AG04449 (cell line): ENCODE measurements at regions of chr12 and their contacts with region 1.

Region 1: GRCh38 chr12:120292661-120293531 is at the start of gene RNU4-1:
- DNase-seq: peak; percentile 79
- H3K4me3 ChIP-seq: peak within 1 kb of the TSS; percentile 61
- CTCF ChIP-seq: no peak

Region 2: GRCh38 chr12:120116792-120117651 is 175.9 kb before region 1 on chr12:
- CTCF ChIA-PET with region 1: no interaction called
- POLR2A ChIA-PET with region 1: interaction called, 15 read pairs
- DNase-seq: peak; percentile 40
- H3K4me3 ChIP-seq: peak overlapping the region; percentile 90
- CTCF ChIP-seq: no peak

Region 3: DNA sequence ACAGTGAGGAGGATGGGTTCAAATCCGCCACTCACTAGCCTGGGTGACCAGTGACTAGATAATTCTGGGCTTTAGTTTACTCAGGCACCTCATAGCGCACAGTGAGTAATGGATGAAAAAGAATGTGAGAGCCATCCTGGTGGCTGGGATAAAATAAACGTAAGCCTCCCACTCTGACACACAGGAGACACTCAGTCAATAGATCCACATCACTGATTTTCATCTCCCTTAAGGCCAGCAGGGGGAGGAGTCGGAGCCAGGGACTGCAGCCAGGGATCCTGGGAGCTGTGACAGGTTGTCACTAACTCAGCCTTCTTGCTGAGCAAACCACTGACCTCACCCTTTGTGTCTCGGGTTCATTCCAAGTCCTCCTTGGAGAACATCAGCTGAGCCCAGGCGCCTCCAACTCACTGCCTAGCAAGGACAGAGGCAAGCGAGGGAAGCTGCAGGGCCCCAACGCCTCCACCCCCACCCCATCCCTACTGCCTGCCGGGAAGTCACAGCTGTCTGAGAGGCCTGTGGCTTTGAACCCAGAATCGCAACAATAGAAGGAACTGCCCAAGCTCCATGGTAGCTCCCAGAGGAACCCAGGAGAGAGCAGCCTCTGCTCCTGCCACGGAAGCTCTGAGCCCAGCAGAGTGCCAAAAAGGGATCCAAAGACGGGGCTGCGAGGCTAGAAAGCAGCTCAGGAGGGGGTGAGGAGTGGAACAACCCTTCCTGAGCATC is 58.1 kb before region 1 on chr12:
- CTCF ChIA-PET with region 1: interaction called, 175 read pairs
- POLR2A ChIA-PET with region 1: interaction called, 249 read pairs
- DNase-seq: peak; percentile 88
- H3K4me3 ChIP-seq: peak overlapping the region; percentile 20
- CTCF ChIP-seq: peak; percentile 66

Region 4: DNA sequence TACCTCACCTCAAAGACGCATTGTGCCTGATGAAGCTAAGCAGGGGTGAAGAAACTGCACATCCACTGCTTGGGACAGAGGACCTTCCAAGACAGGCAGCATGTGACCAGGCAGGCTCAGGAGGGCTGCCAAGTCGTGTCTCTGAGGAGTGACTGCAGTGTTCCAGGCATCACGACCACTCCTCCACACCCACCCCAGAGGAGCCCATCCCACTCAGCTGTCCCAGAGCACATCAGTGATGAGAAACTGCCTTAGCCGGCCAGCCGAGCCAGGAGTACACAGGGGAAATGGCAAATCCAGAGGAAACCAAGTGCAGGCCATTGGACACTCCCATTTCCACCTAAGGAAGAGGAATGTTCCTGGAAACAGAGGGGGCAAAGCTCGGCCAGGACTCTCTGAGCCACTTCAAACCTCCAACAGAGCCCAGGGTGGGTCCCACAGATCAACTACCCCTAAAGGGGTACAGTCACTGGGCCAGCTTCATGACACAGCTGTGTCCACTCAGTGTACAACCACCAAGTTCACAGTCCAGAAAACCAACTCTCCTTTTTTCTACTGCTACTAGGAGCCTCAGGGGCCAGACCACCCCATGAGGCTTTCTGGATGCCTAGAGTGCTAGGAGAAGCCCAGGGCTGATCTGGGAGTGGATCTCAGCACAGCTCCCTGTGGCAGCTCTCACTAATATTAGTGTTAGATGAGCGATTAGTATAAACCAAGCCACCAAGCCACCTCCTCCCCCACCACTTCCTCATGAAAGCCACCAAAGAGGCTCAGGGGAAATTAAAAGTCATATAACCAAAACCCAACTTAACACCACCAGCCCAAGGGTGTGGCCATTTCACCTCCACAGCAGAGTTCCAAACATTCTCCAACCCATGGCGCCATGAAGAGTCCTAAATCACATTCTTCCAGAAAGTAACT is 42.8 kb before region 1 on chr12:
- CTCF ChIA-PET with region 1: no interaction called
- POLR2A ChIA-PET with region 1: interaction called, 12 read pairs
- DNase-seq: no peak
- H3K4me3 ChIP-seq: no peak overlapping the region
- CTCF ChIP-seq: no peak

Region 5: GRCh38 chr12:120257041-120257821 is 35.7 kb before region 1 on chr12:
- CTCF ChIA-PET with region 1: no interaction called
- POLR2A ChIA-PET with region 1: interaction called, 34 read pairs
- DNase-seq: peak; percentile 65
- H3K4me3 ChIP-seq: peak overlapping the region; percentile 29
- CTCF ChIP-seq: peak; percentile 13

Region 6: GRCh38 chr12:120265473-120266179 is 27.3 kb before region 1 on chr12 and contains the start of gene PXN:
- CTCF ChIA-PET with region 1: interaction called, 23 read pairs
- POLR2A ChIA-PET with region 1: interaction called, 34 read pairs
- DNase-seq: no peak
- H3K4me3 ChIP-seq: peak within 1 kb of the TSS; percentile 81
- CTCF ChIP-seq: peak; percentile 88

Region 7: DNA sequence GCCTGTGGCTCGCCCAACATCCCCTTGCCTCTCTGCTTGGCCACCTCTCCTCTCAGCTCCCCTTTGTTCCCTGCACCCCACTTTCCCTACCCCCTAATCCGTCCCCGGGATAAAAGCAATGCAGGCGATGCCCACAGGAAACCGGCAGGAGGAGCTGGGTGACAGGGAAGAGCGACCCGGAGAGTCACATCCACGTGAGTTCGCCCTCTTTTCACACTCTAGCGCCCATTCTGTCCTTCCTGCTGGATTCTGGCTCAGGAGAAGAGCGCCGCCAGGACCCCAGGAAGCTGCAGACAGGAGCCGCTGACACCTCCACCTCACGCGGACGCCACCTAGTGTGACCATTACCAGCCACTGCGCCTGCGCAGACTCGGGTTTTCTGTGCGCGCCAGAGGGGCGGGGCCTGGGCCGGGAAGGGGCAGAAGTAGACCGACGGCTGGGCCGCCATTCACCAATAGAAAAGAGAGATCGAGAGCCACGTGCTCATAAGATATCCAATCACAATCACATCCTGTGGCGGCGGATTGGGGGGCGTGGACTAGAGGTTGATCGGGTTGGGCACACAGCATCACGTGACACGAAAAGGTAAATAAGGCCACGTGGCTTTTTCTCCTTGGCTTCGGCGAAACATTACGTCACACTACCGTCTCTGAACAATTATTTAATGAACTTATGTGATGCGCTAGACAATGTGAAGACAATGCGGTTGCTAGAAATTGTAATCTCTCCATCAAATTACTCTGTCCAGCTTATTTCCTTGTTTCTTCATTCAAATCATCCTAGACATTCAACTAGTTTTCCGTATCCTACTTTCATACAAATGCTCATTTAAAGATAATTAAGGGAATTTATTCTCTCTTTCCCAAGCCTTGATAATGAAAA is 24.6 kb after region 1 on chr12:
- CTCF ChIA-PET with region 1: interaction called, 5 read pairs
- POLR2A ChIA-PET with region 1: interaction called, 12 read pairs
- DNase-seq: peak; percentile 91
- H3K4me3 ChIP-seq: peak overlapping the region; percentile 85
- CTCF ChIP-seq: peak; percentile 53